ENCODE measurements at regions of chr19 and their contacts with region 1.

Region 1: DNA sequence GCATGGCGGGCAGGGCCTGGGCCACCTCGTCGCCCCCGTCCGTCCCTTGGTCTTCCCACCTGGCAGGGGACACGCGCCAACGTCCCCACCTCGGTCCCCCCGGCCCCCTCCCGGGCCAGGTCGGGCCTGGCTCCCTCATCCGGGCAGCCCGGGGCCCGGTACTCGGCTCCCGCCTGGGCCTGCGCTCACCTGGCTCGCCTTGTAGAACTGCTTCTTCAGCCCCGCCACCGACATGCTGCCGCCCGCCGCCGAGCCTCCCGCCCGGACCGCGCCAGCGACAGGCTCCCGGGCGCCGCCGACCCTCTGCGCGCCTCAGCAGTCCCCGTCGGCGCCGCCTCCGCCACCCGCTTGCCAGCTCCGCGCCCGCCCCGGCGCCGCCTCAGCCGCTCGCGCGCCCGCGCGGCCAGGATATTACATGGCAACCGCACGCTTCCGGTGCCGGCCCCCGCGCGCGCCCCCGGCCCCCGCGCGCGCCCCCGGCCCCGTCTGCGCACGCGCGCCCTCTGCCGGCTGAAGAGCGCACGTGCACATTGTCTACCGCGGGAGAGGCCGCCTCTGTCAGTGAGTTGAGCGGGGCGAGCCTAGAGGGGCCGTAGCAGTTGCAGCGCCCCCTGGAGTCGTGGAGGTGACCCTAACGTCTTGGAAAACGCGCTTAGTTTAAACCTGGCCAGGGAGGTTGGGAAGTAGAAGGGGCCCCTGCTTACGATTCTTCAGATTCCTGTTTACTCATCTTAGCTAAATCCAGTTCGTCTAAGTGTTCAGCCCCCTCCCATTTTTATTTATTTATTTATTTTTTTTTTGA is at the start of gene SH3GL1:
- DNase-seq: peak; percentile 95
- ATAC-seq: peak; percentile 65
- H3K4me3 Mint-ChIP-seq: peak within 1 kb of the TSS; percentile 88
- H3K27ac Mint-ChIP-seq: peak within 1 kb of the TSS; percentile 91
- H3K4me1 Mint-ChIP-seq: peaks cover 59% of the 10 kb centered on the region
- H3K27me3 Mint-ChIP-seq: no peaks in the 10 kb centered on the region
- CTCF ChIP-seq: peak; percentile 58
- total RNA-seq, gene SH3GL1: 33.8 and 43.7 TPM in 2 replicates

Region 2: GRCh38 chr19:3505598-3506383 is 894.5 kb before region 1 on chr19 and contains the start of gene FZR1:
- CTCF ChIA-PET with region 1: no interaction called
- POLR2A ChIA-PET with region 1: no interaction called
- intact Hi-C with region 1: loop called (anchors 5 kb)
- DNase-seq: peak; percentile 98
- ATAC-seq: peak; percentile 91
- H3K4me3 Mint-ChIP-seq: peak within 1 kb of the TSS; percentile 91
- H3K27ac Mint-ChIP-seq: peak within 1 kb of the TSS; percentile 96
- H3K4me1 Mint-ChIP-seq: peaks cover 47% of the 10 kb centered on the region
- H3K27me3 Mint-ChIP-seq: no peaks in the 10 kb centered on the region
- CTCF ChIP-seq: no peak
- total RNA-seq, gene FZR1: 53.5 and 66.0 TPM in 2 replicates

Region 3: DNA sequence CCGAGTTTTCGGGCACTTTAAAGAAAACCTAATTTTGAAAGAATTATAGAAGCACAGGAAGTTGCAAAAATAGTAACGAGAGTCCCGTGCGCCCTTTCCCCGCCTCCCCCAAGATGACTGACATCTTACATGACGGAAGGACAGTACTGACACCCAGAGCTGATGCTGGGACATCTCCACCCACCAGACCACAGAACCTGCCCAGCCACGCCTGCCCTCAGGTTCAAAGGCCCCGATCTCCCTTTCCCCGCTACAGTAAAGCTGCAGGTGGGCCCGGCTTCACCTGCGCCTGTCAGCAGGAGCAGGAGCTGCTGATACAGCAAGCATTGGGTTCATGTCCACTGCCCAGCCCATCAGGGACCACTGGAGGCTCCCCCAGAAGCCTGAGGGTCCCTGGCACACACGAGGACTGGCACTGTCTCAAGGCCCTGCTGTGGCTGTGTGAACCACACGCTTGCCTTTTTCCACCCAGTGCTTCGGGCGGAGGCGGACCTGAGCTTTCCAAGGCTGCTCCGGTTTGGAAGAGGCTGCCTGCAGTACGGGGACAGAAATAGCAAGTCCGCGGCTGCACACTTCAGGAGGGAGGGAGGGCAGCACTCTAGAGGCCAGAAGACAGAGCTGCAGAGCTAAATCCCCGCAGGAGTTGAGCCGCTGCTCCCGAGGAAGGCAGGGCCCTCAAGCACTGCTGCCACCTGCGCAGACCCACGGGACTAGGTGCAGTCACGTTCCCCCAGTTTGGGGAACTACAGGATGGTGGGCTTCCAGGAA is 285.1 kb before region 1 on chr19:
- CTCF ChIA-PET with region 1: no interaction called
- POLR2A ChIA-PET with region 1: no interaction called
- intact Hi-C with region 1: no loop called
- DNase-seq: peak; percentile 36
- ATAC-seq: peak; percentile 91
- H3K4me3 Mint-ChIP-seq: peak overlapping the region; percentile 72
- H3K27ac Mint-ChIP-seq: peak overlapping the region; percentile 86
- H3K4me1 Mint-ChIP-seq: peaks cover 54% of the 10 kb centered on the region
- H3K27me3 Mint-ChIP-seq: no peaks in the 10 kb centered on the region
- CTCF ChIP-seq: no peak

Region 4: GRCh38 chr19:4267101-4267900 is 133.0 kb before region 1 on chr19:
- CTCF ChIA-PET with region 1: interaction called, 4 read pairs
- POLR2A ChIA-PET with region 1: interaction called, 6 read pairs
- intact Hi-C with region 1: loop called (anchors 1 kb)
- DNase-seq: peak; percentile 55
- ATAC-seq: peak; percentile 75
- H3K4me3 Mint-ChIP-seq: no peak overlapping the region
- H3K27ac Mint-ChIP-seq: no peak overlapping the region
- H3K4me1 Mint-ChIP-seq: peaks cover 15% of the 10 kb centered on the region
- H3K27me3 Mint-ChIP-seq: no peaks in the 10 kb centered on the region
- CTCF ChIP-seq: no peak

Region 5: GRCh38 chr19:4362861-4363510 is 37.4 kb before region 1 on chr19:
- CTCF ChIA-PET with region 1: interaction called, 31 read pairs
- POLR2A ChIA-PET with region 1: interaction called, 6 read pairs
- intact Hi-C with region 1: loop called (anchors 1 kb)
- DNase-seq: no peak
- ATAC-seq: no peak
- H3K4me3 Mint-ChIP-seq: no peak overlapping the region
- H3K27ac Mint-ChIP-seq: no peak overlapping the region
- H3K4me1 Mint-ChIP-seq: peaks cover 6% of the 10 kb centered on the region
- H3K27me3 Mint-ChIP-seq: no peaks in the 10 kb centered on the region
- CTCF ChIP-seq: no peak

Region 6: DNA sequence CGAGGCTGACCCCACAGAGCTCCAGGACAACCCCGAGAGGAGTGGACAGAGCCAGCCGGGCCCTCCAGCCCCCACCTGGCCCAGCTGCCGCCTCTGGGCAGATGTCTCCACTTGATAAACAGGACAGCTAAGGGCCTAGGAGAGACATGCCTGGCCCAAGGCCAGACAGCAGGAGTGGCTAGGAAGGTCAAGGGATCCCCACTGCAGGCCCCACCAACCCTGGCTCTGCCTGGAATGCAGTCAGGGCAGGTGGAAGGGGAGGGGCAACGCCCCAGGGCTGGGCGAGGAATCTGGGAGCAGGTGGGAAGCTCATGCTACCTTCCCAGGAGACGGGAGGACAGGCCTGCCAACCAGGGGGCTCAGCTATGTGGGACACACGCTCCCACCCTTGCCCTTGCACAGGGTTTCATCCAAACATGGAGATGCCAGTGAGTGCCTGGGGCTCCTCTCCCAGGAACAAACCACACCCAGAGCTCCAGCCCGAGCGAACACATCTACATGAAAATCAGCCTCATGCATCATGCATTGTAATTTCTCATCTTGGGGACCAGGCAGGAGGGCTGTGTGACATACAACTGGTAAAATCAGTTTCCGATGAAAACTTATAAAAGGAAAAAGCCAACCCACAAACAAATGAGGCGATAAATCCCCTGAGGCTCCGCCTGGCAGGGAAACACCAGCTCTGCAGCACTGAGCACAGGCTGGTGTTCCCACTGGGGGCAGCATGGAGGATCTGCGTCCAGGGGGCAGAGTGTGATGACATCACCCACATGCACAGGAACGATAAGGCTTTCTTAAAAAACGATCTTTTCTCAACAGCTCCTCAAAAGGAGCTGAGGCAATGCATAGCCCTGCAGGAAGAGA is 24.9 kb before region 1 on chr19:
- CTCF ChIA-PET with region 1: interaction called, 31 read pairs
- POLR2A ChIA-PET with region 1: interaction called, 13 read pairs
- intact Hi-C with region 1: loop called (anchors 1 kb)
- DNase-seq: peak; percentile 59
- ATAC-seq: peak; percentile 78
- H3K4me3 Mint-ChIP-seq: peak overlapping the region; percentile 73
- H3K27ac Mint-ChIP-seq: peak overlapping the region; percentile 65
- H3K4me1 Mint-ChIP-seq: peaks cover 95% of the 10 kb centered on the region
- H3K27me3 Mint-ChIP-seq: no peaks in the 10 kb centered on the region
- CTCF ChIP-seq: no peak

Region 7: GRCh38 chr19:4439243-4439642 is 38.9 kb after region 1 on chr19:
- CTCF ChIA-PET with region 1: no interaction called
- POLR2A ChIA-PET with region 1: no interaction called
- intact Hi-C with region 1: no loop called
- DNase-seq: no peak
- ATAC-seq: no peak
- H3K4me3 Mint-ChIP-seq: no peak overlapping the region
- H3K27ac Mint-ChIP-seq: no peak overlapping the region
- H3K4me1 Mint-ChIP-seq: peaks cover 20% of the 10 kb centered on the region
- H3K27me3 Mint-ChIP-seq: no peaks in the 10 kb centered on the region
- CTCF ChIP-seq: no peak

Region 8: DNA sequence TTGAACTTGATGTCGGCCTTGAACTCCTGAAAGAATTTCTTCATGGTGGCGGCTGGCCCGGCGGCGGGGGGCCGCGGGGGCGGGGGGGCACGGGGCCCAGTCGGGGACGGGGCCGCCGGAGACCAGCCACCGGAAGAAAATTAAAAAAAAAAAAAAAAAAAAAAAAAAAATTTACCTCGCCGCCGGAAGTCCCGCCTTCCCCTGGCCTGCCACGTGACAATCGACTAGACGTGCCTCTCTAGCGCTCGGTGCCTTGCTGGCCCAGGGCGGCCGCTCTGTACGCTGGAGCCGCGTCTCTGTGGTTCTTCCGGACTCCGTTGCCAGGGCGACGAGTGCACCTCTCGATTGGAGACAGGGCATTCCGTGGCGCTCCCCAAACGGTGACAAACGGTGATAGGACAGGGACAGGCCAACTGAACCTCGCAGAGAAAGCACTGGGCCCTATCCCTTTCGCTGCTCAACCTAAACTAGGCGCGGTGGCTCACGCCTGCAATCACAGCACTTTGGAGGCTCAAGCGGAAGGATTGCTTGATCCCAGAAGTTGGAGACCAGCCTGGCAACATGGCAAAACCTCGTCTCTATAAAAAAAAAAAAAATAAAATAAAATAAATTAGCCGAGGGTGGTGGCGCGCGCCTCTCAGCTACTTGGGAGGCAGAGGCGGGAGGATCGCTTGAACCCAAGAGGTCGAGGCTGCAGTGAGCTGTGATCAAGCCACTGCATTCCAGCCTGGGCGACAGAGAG is 57.5 kb after region 1 on chr19 and contains the start of gene UBXN6:
- CTCF ChIA-PET with region 1: no interaction called
- POLR2A ChIA-PET with region 1: no interaction called
- intact Hi-C with region 1: loop called (anchors 1 kb)
- DNase-seq: peak; percentile 95
- ATAC-seq: peak; percentile 95
- H3K4me3 Mint-ChIP-seq: peak within 1 kb of the TSS; percentile 89
- H3K27ac Mint-ChIP-seq: peak within 1 kb of the TSS; percentile 86
- H3K4me1 Mint-ChIP-seq: peaks cover 20% of the 10 kb centered on the region
- H3K27me3 Mint-ChIP-seq: no peaks in the 10 kb centered on the region
- CTCF ChIP-seq: no peak
- total RNA-seq, gene UBXN6: 54.3 and 58.2 TPM in 2 replicates

Measured in activated B cell treated with CpG ODN at 0.5 μM for 24 hours (primary cell).